ENCODE measurements at regions of chr15 and their contacts with region 1.

Region 1: GRCh38 chr15:73964736-73965093 is 27.4 kb downstream of the STOML1 start:
- DNase-seq: peak; percentile 80 to 87 (median 83)
- H3K4me3 ChIP-seq: peak overlapping the region in 1 of 2 donors; percentile 64
- H3K4me3 Mint-ChIP-seq: peak overlapping the region; percentile 75 to 88 (median 84)
- H3K27ac ChIP-seq: peak overlapping the region; percentile 24
- H3K27ac Mint-ChIP-seq: peak overlapping the region; percentile 43 to 93 (median 77)
- H3K4me1 ChIP-seq: peaks cover 32% of the 10 kb centered on the region
- H3K4me1 Mint-ChIP-seq: peaks cover 24 to 41% (median 31%) of the 10 kb centered on the region in 4 donors
- H3K27me3 ChIP-seq: no peaks in the 10 kb centered on the region
- H3K27me3 Mint-ChIP-seq: no peaks in the 10 kb centered on the region

Region 2: DNA sequence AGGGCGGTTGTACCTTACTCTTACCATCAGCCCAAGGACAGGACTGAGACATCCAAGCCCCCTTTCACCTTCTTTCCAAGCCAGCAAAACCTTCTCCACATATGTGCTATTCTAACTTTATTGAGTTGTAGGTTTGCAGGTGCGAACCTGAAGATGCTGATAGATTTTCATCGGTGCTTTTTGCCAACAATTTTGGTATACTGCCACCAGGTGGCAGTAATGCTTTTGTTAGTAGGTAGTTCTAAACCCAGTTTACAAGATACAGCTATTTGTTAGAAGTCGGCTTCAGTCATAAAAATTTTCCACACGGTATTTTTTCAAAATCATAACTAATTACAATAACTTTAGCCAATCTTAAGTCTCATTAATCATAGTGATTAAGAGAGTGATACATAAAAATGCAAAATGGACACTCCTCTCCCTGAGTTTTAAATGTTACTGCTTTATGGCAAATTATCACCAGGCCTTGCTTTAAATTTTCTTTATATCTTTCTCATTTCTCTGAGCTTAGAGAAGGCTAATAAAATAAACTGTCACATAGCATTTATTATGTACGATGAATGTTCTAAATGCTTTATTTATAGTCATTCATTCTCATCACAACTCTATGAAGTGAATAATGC is 90.7 kb before region 1 on chr15:
- CTCF ChIA-PET with region 1: interaction called, 6 read pairs
- POLR2A ChIA-PET with region 1: no interaction called
- intact Hi-C with region 1: loop called (anchors 1 kb)
- DNase-seq: peak in 4 of 5 donors; percentile 44 to 50 (median 46)
- H3K4me3 ChIP-seq: no peak overlapping the region
- H3K4me3 Mint-ChIP-seq: no peak overlapping the region
- H3K27ac ChIP-seq: no peak overlapping the region
- H3K27ac Mint-ChIP-seq: no peak overlapping the region
- H3K4me1 ChIP-seq: no peaks in the 10 kb centered on the region
- H3K4me1 Mint-ChIP-seq: no peaks in the 10 kb centered on the region
- H3K27me3 ChIP-seq: peaks cover 5% of the 10 kb centered on the region
- H3K27me3 Mint-ChIP-seq: peaks cover 31 to 33% of the 10 kb centered on the region in 2 donors

Region 3: GRCh38 chr15:73897441-73898261 is 67.1 kb before region 1 on chr15:
- CTCF ChIA-PET with region 1: interaction called, 3 read pairs
- POLR2A ChIA-PET with region 1: no interaction called
- intact Hi-C with region 1: loop called (anchors 1 kb)
- DNase-seq: peak; percentile 51 to 60 (median 57)
- H3K4me3 ChIP-seq: no peak overlapping the region
- H3K4me3 Mint-ChIP-seq: no peak overlapping the region
- H3K27ac ChIP-seq: no peak overlapping the region
- H3K27ac Mint-ChIP-seq: no peak overlapping the region
- H3K4me1 ChIP-seq: no peaks in the 10 kb centered on the region
- H3K4me1 Mint-ChIP-seq: peaks cover 0 to 9% (median under 1%) of the 10 kb centered on the region in 4 donors
- H3K27me3 ChIP-seq: no peaks in the 10 kb centered on the region
- H3K27me3 Mint-ChIP-seq: peaks cover 0 to 2% of the 10 kb centered on the region in 2 donors